Caco-2 (cell line): ENCODE measurements at regions of chr7 and their contacts with region 1.

Region 1: DNA sequence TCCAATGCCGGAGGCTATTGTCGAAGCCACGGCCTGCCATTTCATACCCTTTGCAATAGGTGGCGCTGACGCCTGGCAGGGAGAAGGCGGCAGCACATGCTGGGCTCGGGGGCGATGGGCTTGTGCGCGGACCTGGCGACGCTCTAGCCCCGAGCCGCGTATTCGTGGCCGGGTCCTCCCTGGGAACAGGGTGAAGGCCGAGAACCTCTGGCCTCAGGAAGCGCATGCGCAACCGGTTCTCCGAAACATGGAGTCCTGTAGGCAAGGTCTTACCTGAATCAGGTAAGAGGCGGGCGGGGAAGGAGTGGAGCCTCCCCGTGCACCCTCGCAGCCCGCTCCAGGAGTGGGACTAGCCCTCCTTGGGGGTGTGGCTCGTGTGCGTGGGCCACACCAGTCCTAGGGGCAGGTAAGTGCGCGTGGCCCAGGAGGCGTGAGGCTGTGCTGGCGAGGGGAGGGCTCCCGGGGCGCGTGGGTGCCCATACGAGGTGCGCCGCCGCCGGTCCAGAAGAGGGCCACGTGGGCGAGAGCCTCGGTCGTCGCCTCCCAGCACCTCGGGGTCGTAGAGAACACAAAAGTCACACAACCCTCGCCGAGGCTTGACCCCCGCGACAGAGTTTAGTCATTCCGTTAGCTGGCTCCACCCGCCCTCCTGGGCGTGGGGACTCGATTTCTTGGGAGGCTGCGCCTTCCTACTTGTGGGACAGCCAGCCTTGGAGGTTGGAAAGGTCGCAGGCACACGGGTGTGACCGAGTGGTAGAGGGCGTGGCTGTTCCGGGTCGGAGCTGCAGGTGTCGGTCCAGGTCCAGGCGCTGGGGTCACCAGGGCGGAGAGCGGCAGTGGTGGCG is 5.5 kb upstream of the MEST start:
- DNase-seq: peak; percentile 96 to 98
- H3K4me3 ChIP-seq: peak overlapping the region; percentile 98
- H3K4me3 Mint-ChIP-seq: peak overlapping the region; percentile 97
- H3K27ac Mint-ChIP-seq: peak overlapping the region; percentile 96
- H3K4me1 ChIP-seq: peaks cover 40% of the 10 kb centered on the region
- H3K4me1 Mint-ChIP-seq: peaks cover 45% of the 10 kb centered on the region
- H3K27me3 ChIP-seq: no peaks in the 10 kb centered on the region
- H3K27me3 Mint-ChIP-seq: no peaks in the 10 kb centered on the region
- CTCF ChIP-seq: peak; percentile 91 to 92

Region 2: GRCh38 chr7:130242198-130243014 is 243.9 kb before region 1 on chr7:
- CTCF ChIA-PET with region 1: no interaction called
- POLR2A ChIA-PET with region 1: no interaction called
- intact Hi-C with region 1: loop called (anchors 2 kb)
- DNase-seq: peak; percentile 58 to 79
- H3K4me3 ChIP-seq: no peak overlapping the region
- H3K4me3 Mint-ChIP-seq: no peak overlapping the region
- H3K27ac Mint-ChIP-seq: no peak overlapping the region
- H3K4me1 ChIP-seq: no peaks in the 10 kb centered on the region
- H3K4me1 Mint-ChIP-seq: no peaks in the 10 kb centered on the region
- H3K27me3 ChIP-seq: no peaks in the 10 kb centered on the region
- H3K27me3 Mint-ChIP-seq: no peaks in the 10 kb centered on the region
- CTCF ChIP-seq: peak; percentile 87 to 92

Region 3: DNA sequence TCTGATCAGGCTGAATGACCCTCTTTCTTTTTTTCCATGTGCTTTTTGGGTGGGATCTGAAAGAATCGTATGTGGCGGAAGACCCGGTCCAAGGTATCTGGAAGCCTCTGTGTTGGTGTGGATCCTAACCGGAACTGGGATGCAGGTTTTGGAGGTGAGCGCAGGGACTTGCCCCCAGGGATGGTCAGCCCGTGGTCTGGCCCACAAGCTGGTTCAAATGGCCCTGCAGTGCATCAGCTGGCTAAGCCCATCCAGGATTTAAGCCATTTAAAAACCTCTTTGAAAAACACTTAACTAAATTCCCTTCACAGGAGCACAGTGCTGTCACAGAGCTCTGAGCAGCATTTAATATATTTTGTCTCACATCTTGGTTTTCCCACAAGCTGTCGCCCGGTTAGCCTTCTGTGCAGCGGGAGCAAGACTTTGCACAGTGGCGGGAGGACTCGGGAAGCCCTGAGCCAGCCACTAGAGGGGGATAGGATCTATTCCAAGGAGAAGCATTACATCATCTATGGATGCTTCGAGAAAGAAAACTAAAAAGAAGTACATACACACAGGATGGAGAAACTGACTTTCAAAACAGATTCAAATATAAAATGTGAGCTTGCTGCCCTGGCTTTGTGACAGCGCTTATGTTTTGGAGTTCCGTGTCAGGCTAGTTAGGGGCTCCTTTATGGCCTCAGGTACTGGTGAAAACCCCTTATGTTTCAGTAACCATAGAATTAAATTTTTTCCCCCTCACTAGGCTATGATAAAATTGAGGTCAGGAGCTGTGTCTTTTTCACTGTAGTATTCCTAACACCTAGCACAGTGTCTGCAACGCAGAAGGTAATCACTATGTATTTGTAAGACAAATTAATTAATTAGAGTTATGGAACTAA is 208.3 kb before region 1 on chr7:
- CTCF ChIA-PET with region 1: no interaction called
- POLR2A ChIA-PET with region 1: no interaction called
- intact Hi-C with region 1: loop called (anchors 1 kb)
- DNase-seq: peak; percentile 66 to 67
- H3K4me3 ChIP-seq: no peak overlapping the region
- H3K4me3 Mint-ChIP-seq: no peak overlapping the region
- H3K27ac Mint-ChIP-seq: peak overlapping the region; percentile 45
- H3K4me1 ChIP-seq: peaks cover 6% of the 10 kb centered on the region; the same call in 1 of the 2 replicates
- H3K4me1 Mint-ChIP-seq: peaks cover 7% of the 10 kb centered on the region
- H3K27me3 ChIP-seq: no peaks in the 10 kb centered on the region
- H3K27me3 Mint-ChIP-seq: no peaks in the 10 kb centered on the region
- CTCF ChIP-seq: peak; percentile 47 to 48

Region 4: DNA sequence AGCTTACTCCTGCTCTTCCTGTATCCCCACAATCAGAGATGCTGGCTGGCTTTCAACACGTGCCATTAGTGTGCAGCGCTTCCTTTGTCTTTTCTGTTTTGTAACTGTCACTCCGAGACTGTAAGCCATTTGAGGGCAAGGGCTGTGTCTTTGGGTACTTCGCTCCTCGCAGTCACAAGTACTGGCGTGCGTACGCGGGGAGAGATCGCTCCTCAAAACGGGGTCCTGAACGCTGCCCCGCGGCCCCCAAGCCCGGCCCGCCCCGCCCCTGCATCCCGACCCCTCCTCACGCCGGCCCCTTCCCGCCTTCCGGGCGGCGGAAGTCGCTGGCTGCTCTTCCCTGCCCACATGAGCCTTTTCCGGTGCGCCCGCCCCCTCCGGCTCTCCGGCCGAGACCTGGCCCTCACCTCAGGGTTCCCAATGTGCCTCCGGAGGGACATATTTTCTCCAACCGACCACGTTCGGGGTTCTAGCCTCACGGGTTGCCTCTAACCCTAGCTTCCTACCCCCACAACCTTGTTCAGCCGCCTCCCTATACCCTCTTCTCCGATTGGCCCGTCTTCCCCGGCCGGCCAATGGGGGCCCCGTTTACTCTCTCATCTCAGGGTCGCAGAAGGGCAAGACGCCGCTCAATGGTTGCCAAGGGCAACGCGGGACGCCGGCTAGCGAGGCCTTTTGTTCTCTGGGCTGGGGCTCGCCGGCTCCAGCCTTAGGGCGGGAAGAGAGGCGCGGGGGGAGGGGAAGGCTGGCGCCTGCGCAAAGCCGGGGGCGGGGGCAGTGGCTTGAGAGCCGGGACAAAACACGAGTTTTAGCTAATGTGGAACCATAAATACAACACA is 45.6 kb before region 1 on chr7 and contains the start of gene CEP41:
- CTCF ChIA-PET with region 1: no interaction called
- POLR2A ChIA-PET with region 1: interaction called, 5 read pairs
- intact Hi-C with region 1: loop called (anchors 1 kb)
- DNase-seq: peak; percentile 99
- H3K4me3 ChIP-seq: peak within 1 kb of the TSS; percentile 72
- H3K4me3 Mint-ChIP-seq: peak within 1 kb of the TSS; percentile 99
- H3K27ac Mint-ChIP-seq: peak within 1 kb of the TSS; percentile 100
- H3K4me1 ChIP-seq: peaks cover 10% of the 10 kb centered on the region
- H3K4me1 Mint-ChIP-seq: no peaks in the 10 kb centered on the region
- H3K27me3 ChIP-seq: no peaks in the 10 kb centered on the region
- H3K27me3 Mint-ChIP-seq: no peaks in the 10 kb centered on the region
- CTCF ChIP-seq: no peak
- total RNA-seq, gene CEP41: 14.3 and 14.9 TPM in 2 replicates

Region 5: DNA sequence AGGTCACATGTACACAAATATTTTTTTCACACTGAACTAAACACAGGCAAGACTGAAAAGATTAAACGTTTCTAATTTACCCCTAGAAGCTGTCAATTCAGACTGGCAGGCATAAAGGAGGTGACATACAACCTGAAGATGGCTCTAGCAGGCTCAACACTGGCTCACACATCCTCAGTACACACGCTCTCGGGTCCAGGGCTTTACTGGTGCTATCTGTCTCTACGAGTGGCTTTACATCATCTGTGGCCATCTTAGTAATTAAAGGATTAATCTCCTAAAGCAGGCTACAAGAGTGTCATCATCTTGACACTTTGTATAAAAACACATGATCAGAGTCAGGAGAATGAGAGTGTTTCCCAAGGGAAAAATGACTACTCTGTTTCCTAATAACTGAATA is 124.9 kb after region 1 on chr7:
- CTCF ChIA-PET with region 1: no interaction called
- POLR2A ChIA-PET with region 1: no interaction called
- intact Hi-C with region 1: loop called (anchors 5 kb)
- DNase-seq: no peak
- H3K4me3 ChIP-seq: no peak overlapping the region
- H3K4me3 Mint-ChIP-seq: no peak overlapping the region
- H3K27ac Mint-ChIP-seq: no peak overlapping the region
- H3K4me1 ChIP-seq: no peaks in the 10 kb centered on the region
- H3K4me1 Mint-ChIP-seq: no peaks in the 10 kb centered on the region
- H3K27me3 ChIP-seq: no peaks in the 10 kb centered on the region
- H3K27me3 Mint-ChIP-seq: no peaks in the 10 kb centered on the region
- CTCF ChIP-seq: no peak

Region 6: DNA sequence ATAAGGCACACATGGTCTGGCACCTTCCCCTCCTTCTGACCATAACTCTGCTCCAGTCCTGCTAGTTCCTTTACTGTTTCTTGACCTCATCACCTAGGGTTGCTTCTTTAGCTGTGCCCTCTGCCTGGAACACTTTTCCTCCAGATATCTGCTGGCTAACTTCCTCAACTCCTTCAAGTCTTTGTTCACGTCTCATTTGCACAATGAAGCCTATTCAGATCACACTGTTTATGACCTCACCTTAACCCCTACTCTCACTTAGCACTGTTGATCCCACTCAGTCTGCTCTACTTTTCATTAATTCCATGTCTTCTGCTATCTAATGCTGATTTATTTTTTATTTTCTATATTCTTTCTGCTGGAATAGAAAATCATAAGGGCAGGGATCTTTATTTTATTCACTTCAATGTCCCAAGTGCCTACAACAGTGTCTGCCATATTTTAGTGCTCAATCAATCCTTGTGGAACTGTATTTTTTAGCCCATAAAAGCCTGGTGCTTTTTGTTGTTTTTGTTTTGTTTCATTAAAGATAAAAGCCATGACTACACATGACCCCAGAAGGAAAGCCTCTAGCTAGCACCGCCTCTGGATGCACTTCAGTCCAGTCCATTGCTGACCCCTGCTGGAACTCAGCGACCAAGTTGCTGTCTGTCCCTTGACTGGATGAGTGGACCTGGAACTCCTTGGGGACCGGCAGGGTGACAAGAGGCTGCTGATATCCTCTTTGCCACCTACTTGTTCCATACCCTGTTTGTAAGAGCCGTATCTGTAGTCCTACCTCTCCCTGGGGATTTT is 235.3 kb after region 1 on chr7:
- CTCF ChIA-PET with region 1: interaction called, 3 read pairs
- POLR2A ChIA-PET with region 1: no interaction called
- intact Hi-C with region 1: loop called (anchors 5 kb)
- DNase-seq: peak; percentile 77 to 79
- H3K4me3 ChIP-seq: no peak overlapping the region
- H3K4me3 Mint-ChIP-seq: no peak overlapping the region
- H3K27ac Mint-ChIP-seq: no peak overlapping the region
- H3K4me1 ChIP-seq: no peaks in the 10 kb centered on the region
- H3K4me1 Mint-ChIP-seq: no peaks in the 10 kb centered on the region
- H3K27me3 ChIP-seq: no peaks in the 10 kb centered on the region; the same call in 1 of the 2 replicates
- H3K27me3 Mint-ChIP-seq: no peaks in the 10 kb centered on the region
- CTCF ChIP-seq: peak; percentile 67 to 81

Region 7: DNA sequence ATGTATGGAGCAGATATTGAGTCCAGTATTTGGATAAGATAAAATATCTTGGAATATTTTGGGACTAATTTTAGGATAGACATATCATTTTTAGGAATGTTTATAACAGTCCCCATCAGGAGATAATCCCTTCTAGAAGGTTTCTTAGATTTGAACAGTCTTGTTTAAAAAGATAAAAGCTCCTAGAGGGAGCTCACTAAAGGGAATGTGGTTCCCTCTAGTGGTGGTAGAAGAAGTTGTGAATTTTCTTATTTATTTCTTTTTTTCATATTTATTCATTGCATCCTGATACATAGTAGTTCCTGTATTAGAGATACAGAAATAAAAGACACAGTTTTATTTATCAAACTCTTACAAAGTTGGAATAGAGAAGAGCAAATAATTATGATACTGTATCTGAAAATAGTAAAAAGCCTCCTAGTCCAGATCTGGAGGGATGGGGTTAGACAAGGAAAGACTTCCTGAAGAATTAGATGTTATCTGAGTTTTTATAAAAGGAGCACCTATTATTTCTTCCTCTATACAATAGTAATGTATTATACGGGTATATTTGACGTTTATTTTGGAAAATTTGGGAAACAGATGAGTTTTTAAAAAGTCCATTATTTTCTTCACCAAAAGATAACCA is 272.2 kb after region 1 on chr7:
- CTCF ChIA-PET with region 1: no interaction called
- POLR2A ChIA-PET with region 1: no interaction called
- intact Hi-C with region 1: loop called (anchors 10 kb)
- DNase-seq: peak in 1 of 2 experiments; percentile 28
- H3K4me3 ChIP-seq: no peak overlapping the region
- H3K4me3 Mint-ChIP-seq: no peak overlapping the region
- H3K27ac Mint-ChIP-seq: no peak overlapping the region
- H3K4me1 ChIP-seq: no peaks in the 10 kb centered on the region
- H3K4me1 Mint-ChIP-seq: no peaks in the 10 kb centered on the region
- H3K27me3 ChIP-seq: no peaks in the 10 kb centered on the region
- H3K27me3 Mint-ChIP-seq: peaks cover 13% of the 10 kb centered on the region
- CTCF ChIP-seq: peak; percentile 65 to 69